ENCODE measurements at regions of chr10 and their contacts with region 1.

Region 1: GRCh38 chr10:101602761-101603398 is 14.8 kb downstream of the DPCD start:
- DNase-seq: peak; percentile 86
- H3K4me3 Mint-ChIP-seq: no peak overlapping the region
- H3K27ac Mint-ChIP-seq: no peak overlapping the region
- H3K4me1 Mint-ChIP-seq: no peaks in the 10 kb centered on the region
- H3K27me3 Mint-ChIP-seq: no peaks in the 10 kb centered on the region

Region 2: GRCh38 chr10:101587725-101588653 is 14.9 kb before region 1 on chr10 and contains the starts of genes DPCD and POLL:
- CTCF ChIA-PET with region 1: interaction called, 14 read pairs
- POLR2A ChIA-PET with region 1: interaction called, 3 read pairs
- intact Hi-C with region 1: no loop called
- DNase-seq: peak; percentile 95
- H3K4me3 Mint-ChIP-seq: peak within 1 kb of the TSS; percentile 91
- H3K27ac Mint-ChIP-seq: peak within 1 kb of the TSS; percentile 69
- H3K4me1 Mint-ChIP-seq: peaks cover 21% of the 10 kb centered on the region
- H3K27me3 Mint-ChIP-seq: no peaks in the 10 kb centered on the region
- total RNA-seq, gene DPCD: 13.9 to 14.4 TPM
- total RNA-seq, gene POLL: 29.4 to 30.8 TPM

Region 3: GRCh38 chr10:101676565-101676964 is 73.7 kb after region 1 on chr10:
- CTCF ChIA-PET with region 1: no interaction called
- POLR2A ChIA-PET with region 1: no interaction called
- intact Hi-C with region 1: no loop called
- DNase-seq: no peak
- H3K4me3 Mint-ChIP-seq: no peak overlapping the region
- H3K27ac Mint-ChIP-seq: no peak overlapping the region
- H3K4me1 Mint-ChIP-seq: peaks cover 2% of the 10 kb centered on the region
- H3K27me3 Mint-ChIP-seq: no peaks in the 10 kb centered on the region

Region 4: GRCh38 chr10:101693978-101694673 is 91.2 kb after region 1 on chr10:
- CTCF ChIA-PET with region 1: interaction called, 4 read pairs
- POLR2A ChIA-PET with region 1: no interaction called
- intact Hi-C with region 1: loop called (anchors 5 kb)
- DNase-seq: peak; percentile 74
- H3K4me3 Mint-ChIP-seq: peak overlapping the region; percentile 95
- H3K27ac Mint-ChIP-seq: peak overlapping the region; percentile 97
- H3K4me1 Mint-ChIP-seq: peaks cover 36% of the 10 kb centered on the region
- H3K27me3 Mint-ChIP-seq: no peaks in the 10 kb centered on the region

Region 5: GRCh38 chr10:101774589-101775272 is 171.9 kb after region 1 on chr10:
- CTCF ChIA-PET with region 1: interaction called, 197 read pairs
- POLR2A ChIA-PET with region 1: no interaction called
- intact Hi-C with region 1: no loop called
- DNase-seq: no peak
- H3K4me3 Mint-ChIP-seq: no peak overlapping the region
- H3K27ac Mint-ChIP-seq: no peak overlapping the region
- H3K4me1 Mint-ChIP-seq: peaks cover 26% of the 10 kb centered on the region
- H3K27me3 Mint-ChIP-seq: peaks cover 68% of the 10 kb centered on the region

Region 6: GRCh38 chr10:101814466-101815071 is 211.7 kb after region 1 on chr10:
- CTCF ChIA-PET with region 1: no interaction called
- POLR2A ChIA-PET with region 1: no interaction called
- intact Hi-C with region 1: no loop called
- DNase-seq: no peak
- H3K4me3 Mint-ChIP-seq: peak overlapping the region; percentile 97
- H3K27ac Mint-ChIP-seq: peak overlapping the region; percentile 88
- H3K4me1 Mint-ChIP-seq: peaks cover 46% of the 10 kb centered on the region
- H3K27me3 Mint-ChIP-seq: no peaks in the 10 kb centered on the region

Measured in activated CD4-positive, alpha-beta memory T cell treated with anti-CD3 and anti-CD28 coated beads for 36 hours (primary cell).